Heart left ventricle (tissue), 16 donors: ENCODE measurements at regions of chr11 and their contacts with region 1.

Region 1: DNA sequence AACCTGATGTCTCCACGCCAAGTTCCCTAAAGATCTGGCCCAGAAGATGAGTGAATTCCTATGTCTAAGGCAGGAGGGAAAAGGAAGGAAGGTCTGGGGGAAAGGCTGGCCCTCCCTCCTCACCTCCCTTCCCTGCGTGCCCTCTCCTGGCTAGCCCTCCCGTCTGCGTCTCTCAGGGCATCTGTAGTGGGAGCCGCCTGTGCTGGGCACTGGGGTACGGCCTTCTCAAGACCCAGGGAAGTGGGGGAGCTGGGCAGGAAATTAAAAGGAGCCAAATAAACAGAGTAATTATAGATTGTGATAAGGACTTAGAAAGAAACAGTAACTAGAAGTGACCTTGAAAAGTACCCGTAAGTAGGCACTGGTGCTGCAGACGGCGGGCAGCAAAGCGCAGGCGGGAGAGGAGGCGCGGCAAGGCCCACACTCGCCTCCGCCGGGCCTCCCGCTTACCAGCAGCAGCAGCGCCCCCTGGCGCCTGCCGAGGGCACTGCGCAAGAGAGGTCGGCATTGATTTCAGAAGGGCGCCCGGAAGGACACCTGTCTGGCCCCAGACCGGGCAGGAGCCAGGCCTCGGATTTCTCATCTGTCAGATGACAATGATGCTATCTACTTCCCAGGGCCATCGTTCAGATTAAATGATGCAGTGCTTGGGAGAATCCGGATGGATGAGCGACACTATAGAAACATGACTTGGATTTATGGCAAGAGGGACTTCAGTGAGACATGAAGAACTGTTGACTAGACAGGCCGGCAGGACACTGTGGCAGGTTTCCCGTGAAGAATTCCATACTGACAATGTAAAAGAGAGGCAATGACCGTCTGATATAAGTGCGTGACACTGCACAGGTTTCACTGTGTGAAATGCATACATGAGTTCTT is 7.3 kb downstream of the KCNJ1 start:
- DNase-seq: peak; percentile 61 to 86 (median 76)
- ATAC-seq: peak in 3 of 4 donors; percentile 80 to 93 (median 89)
- H3K4me3 ChIP-seq: no peak overlapping the region
- H3K27ac ChIP-seq: peak overlapping the region in 3 of 12 donors; percentile 4 to 33 (median 30)
- H3K4me1 ChIP-seq: peaks cover 0 to 13% (median 7%) of the 10 kb centered on the region in 12 donors
- H3K27me3 ChIP-seq: no peaks in the 10 kb centered on the region
- CTCF ChIP-seq: peak; percentile 84 to 99 (median 96)
- POLR2A ChIP-seq: no peak

Region 2: DNA sequence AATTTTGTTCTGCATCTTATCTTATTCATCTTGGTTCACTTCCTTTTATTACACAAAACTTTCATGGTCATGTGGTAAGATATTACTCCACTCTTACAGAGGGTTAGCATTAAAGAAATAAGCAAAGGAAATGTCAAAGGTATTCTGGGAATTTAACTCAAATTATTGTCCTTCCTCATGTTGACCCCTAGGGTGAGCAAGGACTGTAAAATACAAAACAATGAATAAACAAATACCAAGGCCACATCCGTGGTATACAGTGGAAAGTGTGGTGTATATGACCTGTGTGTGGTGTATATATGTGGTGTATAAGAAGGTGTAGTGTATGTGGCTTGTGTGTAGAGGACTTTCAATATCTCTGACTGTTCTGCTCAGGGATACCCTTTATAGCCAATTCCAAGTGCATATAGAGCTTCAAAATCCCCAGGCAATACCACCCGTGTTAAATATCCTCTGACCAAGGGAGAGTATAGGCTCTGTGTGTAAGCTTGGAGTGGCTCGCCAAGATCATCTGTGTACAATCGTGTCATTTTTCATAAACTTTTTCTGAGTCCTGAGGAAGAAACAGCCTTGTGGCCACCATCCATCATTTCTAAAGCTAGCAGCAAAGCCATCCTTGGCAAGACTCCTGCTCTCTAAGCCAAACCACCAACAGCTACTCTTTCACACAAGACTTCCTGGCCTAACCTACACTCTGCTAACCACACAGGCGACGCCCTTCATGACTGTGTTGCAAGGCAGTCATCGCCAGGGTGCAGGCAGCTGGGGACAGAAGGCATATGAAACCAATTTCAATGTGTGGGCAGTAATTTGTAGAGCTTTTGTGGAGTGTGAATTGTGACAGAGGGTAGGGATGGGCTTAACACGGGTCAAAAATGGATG is 820.4 kb before region 1 on chr11:
- intact Hi-C with region 1: loop called in 4 of 10 experiments (anchors 5 to 10 kb)
- DNase-seq: peak in 4 of 5 donors; percentile 23 to 74 (median 32)
- ATAC-seq: peak in 3 of 4 donors; percentile 66 to 92 (median 78)
- H3K4me3 ChIP-seq: peak overlapping the region in 1 of 12 donors; percentile 19
- H3K27ac ChIP-seq: peak overlapping the region in 1 of 12 donors; percentile 72
- H3K4me1 ChIP-seq: peaks cover 0 to 39% (median 0%) of the 10 kb centered on the region in 12 donors
- H3K27me3 ChIP-seq: peaks cover 0 to 15% (median 0%) of the 10 kb centered on the region in 9 donors
- CTCF ChIP-seq: peak in 2 of 12 donors; percentile 7 to 16
- POLR2A ChIP-seq: no peak

Region 3: DNA sequence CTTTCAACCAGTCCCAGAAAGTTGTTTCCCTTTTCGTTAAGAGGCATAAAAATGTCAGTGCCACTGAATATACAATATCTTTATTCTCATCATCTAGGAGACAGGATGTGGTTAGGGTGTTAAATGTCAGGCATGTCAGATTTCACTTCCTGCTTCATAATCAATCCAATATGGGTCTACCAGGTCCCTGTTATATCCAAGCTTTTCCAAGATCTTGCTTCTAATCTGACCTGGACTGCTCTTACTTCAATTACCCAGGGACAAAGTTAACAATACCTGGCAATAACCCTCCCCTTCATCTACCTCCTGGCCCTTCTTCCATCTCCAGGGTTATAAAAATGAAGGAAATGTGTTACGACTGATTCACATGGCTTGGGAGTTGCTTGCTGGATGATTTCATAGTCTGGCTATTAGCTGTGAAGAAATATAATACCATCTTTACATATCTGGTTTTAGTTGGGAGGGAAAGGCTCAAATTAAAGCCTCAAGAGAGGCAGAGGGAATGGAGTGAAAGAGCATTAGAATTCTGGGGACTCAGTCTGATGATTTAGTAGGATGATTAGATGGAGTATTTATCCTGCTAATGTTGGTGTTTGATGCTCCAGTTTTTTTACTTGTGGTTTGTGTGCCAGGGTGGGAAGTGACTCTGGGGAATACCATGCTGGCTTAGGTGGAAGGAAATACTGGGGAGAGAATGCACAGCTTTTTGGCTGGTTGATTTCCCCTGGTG is 806.7 kb before region 1 on chr11:
- intact Hi-C with region 1: loop called in 1 of 10 experiments (anchors 10 kb)
- DNase-seq: no peak
- ATAC-seq: peak in 1 of 4 donors; percentile 41
- H3K4me3 ChIP-seq: no peak overlapping the region
- H3K27ac ChIP-seq: peak overlapping the region in 1 of 12 donors; percentile 50
- H3K4me1 ChIP-seq: peaks cover 0 to 37% (median 0%) of the 10 kb centered on the region in 12 donors
- H3K27me3 ChIP-seq: no peaks in the 10 kb centered on the region
- CTCF ChIP-seq: no peak
- POLR2A ChIP-seq: no peak

Region 4: DNA sequence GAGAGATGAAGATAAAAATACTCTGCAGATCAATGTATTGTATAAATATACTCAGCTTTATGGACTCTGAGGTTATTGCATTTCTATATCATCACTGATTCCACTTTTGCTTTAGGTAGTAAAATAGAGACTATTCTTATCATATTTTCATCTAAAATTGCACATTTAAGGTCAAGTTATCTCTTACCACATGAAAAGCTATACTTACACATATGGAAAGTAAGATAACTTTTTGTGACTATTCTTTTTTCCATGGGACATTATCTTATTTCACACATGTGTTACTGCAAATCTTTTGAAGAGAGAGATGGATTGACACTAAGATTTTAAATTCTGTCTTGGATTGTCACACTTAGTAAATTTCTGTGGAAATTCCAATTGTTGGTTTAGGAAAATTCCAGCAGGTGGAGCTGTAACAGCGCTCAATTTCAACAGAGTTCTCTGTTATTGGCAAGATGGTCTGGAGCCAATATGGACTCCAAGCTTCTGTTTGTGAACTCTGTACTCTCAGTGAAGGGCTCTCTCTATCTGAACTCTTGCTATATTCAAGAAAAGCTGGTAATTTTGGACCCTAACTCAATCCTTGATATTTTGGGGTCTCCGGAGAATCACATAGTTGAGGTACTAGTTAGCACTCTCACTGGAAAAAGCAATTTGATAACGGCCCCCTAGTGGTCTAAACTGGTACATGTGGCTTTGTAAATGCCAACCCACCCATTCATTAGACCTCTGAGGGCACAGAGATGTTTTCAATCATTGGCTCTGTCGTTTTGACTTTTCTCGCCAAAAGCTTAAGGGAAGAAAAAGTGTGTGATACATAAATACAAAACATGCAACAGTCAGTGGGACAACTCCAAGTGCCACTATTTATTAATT is 702.1 kb before region 1 on chr11:
- intact Hi-C with region 1: loop called in 1 of 10 experiments (anchors 5 kb)
- DNase-seq: peak in 2 of 5 donors; percentile 25 to 37
- ATAC-seq: peak; percentile 58 to 84 (median 82)
- H3K4me3 ChIP-seq: peak overlapping the region in 6 of 12 donors; percentile 16 to 34 (median 26)
- H3K27ac ChIP-seq: no peak overlapping the region
- H3K4me1 ChIP-seq: peaks cover 0 to 11% (median 0%) of the 10 kb centered on the region in 12 donors
- H3K27me3 ChIP-seq: no peaks in the 10 kb centered on the region
- CTCF ChIP-seq: peak; percentile 71 to 95 (median 88)
- POLR2A ChIP-seq: no peak

Region 5: GRCh38 chr11:128172046-128172878 is 687.5 kb before region 1 on chr11:
- intact Hi-C with region 1: loop called in 1 of 10 experiments (anchors 5 kb)
- DNase-seq: peak; percentile 74 to 83 (median 80)
- ATAC-seq: peak in 3 of 4 donors; percentile 77 to 85 (median 84)
- H3K4me3 ChIP-seq: no peak overlapping the region
- H3K27ac ChIP-seq: peak overlapping the region in 1 of 12 donors; percentile 19
- H3K4me1 ChIP-seq: peaks cover 0 to 8% (median 0%) of the 10 kb centered on the region in 12 donors
- H3K27me3 ChIP-seq: peaks cover 0 to 7% (median 0%) of the 10 kb centered on the region in 9 donors
- CTCF ChIP-seq: peak; percentile 50 to 91 (median 80)
- POLR2A ChIP-seq: no peak

Region 6: DNA sequence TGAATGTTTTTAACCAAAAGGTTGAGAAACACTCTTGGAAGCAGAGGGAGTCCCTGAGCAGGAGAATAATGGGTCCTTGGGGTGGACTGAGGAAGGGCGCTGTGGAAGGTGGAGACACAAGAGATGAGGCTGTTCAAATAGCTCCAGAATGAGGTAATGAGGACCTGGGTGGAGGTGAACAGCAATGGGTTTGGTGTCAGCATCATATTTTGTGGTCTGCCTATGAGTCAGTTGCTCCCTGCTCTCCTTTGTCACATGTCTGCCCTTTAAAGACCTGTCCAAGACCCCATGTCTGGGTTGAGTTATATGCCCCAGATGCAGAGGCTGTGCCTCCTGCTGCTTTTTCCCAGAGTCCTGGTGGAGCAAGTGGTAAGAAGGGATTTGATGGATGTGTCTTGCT is 629.5 kb after region 1 on chr11:
- intact Hi-C with region 1: no loop called
- DNase-seq: no peak
- ATAC-seq: no peak
- H3K4me3 ChIP-seq: no peak overlapping the region
- H3K27ac ChIP-seq: no peak overlapping the region
- H3K4me1 ChIP-seq: no peaks in the 10 kb centered on the region
- H3K27me3 ChIP-seq: peaks cover 0 to 9% (median 0%) of the 10 kb centered on the region in 9 donors
- CTCF ChIP-seq: no peak
- POLR2A ChIP-seq: no peak